CD4-positive, alpha-beta T cell (primary cell): ENCODE measurements at regions of chr14 and their contacts with region 1.

Region 1: GRCh38 chr14:53109105-53110041 is 43.8 kb downstream of the DDHD1 start:
- DNase-seq: peak; percentile 16 to 83 (median 34)
- ATAC-seq: peak; percentile 30
- H3K4me3 ChIP-seq: peak overlapping the region; percentile 61
- H3K4me3 Mint-ChIP-seq: no peak overlapping the region
- H3K27ac ChIP-seq: peak overlapping the region; percentile 63 to 65
- H3K27ac Mint-ChIP-seq: no peak overlapping the region
- H3K4me1 ChIP-seq: peaks cover 15% of the 10 kb centered on the region
- H3K4me1 Mint-ChIP-seq: peaks cover 8% of the 10 kb centered on the region
- H3K27me3 ChIP-seq: no peaks in the 10 kb centered on the region
- H3K27me3 Mint-ChIP-seq: no peaks in the 10 kb centered on the region
- CTCF ChIP-seq: no peak

Region 2: DNA sequence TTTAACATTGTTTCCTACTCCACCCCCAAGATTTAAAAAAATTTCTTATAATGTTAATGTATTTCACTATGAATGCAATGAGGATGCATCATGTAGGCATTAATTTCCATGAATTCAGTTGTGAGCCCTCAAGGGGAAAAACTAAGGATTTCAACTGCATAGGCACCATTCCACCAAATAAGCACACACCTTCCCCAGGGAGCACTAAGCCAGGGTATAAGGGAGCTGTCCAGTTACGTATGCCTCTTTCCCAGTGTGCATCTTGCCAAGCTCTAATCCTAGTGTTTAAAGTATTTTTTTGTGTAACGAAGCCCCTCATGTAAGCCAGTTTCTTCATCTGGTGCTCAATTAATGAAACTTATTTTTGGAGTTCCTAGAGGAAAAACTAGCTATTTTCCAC is 165.1 kb before region 1 on chr14:
- CTCF ChIA-PET with region 1: no interaction called
- POLR2A ChIA-PET with region 1: no interaction called
- intact Hi-C with region 1: no loop called
- DNase-seq: no peak
- ATAC-seq: no peak
- H3K4me3 ChIP-seq: no peak overlapping the region
- H3K4me3 Mint-ChIP-seq: no peak overlapping the region
- H3K27ac ChIP-seq: no peak overlapping the region
- H3K27ac Mint-ChIP-seq: no peak overlapping the region
- H3K4me1 ChIP-seq: no peaks in the 10 kb centered on the region
- H3K4me1 Mint-ChIP-seq: peaks cover 2% of the 10 kb centered on the region
- H3K27me3 ChIP-seq: peaks cover 21 to 31% of the 10 kb centered on the region in 2 experiments
- H3K27me3 Mint-ChIP-seq: peaks cover 42% of the 10 kb centered on the region
- CTCF ChIP-seq: no peak

Region 3: GRCh38 chr14:53126731-53127130 is 17.4 kb after region 1 on chr14:
- CTCF ChIA-PET with region 1: interaction called, 3 read pairs
- POLR2A ChIA-PET with region 1: interaction called, 11 read pairs
- intact Hi-C with region 1: no loop called
- DNase-seq: peak in 1 of 14 experiments; percentile 46
- ATAC-seq: no peak
- H3K4me3 ChIP-seq: peak overlapping the region; percentile 5
- H3K4me3 Mint-ChIP-seq: peak overlapping the region; percentile 76
- H3K27ac ChIP-seq: peak overlapping the region in 1 of 2 donors; percentile 20
- H3K27ac Mint-ChIP-seq: peak overlapping the region; percentile 73
- H3K4me1 ChIP-seq: peaks cover 12% of the 10 kb centered on the region
- H3K4me1 Mint-ChIP-seq: peaks cover 16% of the 10 kb centered on the region
- H3K27me3 ChIP-seq: no peaks in the 10 kb centered on the region
- H3K27me3 Mint-ChIP-seq: no peaks in the 10 kb centered on the region
- CTCF ChIP-seq: no peak

Region 4: GRCh38 chr14:53217295-53217994 is 108.1 kb after region 1 on chr14:
- CTCF ChIA-PET with region 1: no interaction called
- POLR2A ChIA-PET with region 1: interaction called, 10 read pairs
- intact Hi-C with region 1: no loop called
- DNase-seq: peak; percentile 36 to 83 (median 58)
- ATAC-seq: peak; percentile 96
- H3K4me3 ChIP-seq: peak overlapping the region; percentile 58
- H3K4me3 Mint-ChIP-seq: peak overlapping the region; percentile 94
- H3K27ac ChIP-seq: no peak overlapping the region
- H3K27ac Mint-ChIP-seq: peak overlapping the region; percentile 51
- H3K4me1 ChIP-seq: peaks cover 10% of the 10 kb centered on the region
- H3K4me1 Mint-ChIP-seq: peaks cover 19% of the 10 kb centered on the region
- H3K27me3 ChIP-seq: no peaks in the 10 kb centered on the region
- H3K27me3 Mint-ChIP-seq: no peaks in the 10 kb centered on the region
- CTCF ChIP-seq: peak; percentile 56

Region 5: GRCh38 chr14:53325176-53325806 is 215.9 kb after region 1 on chr14:
- CTCF ChIA-PET with region 1: no interaction called
- POLR2A ChIA-PET with region 1: no interaction called
- intact Hi-C with region 1: no loop called
- DNase-seq: no peak
- ATAC-seq: no peak
- H3K4me3 ChIP-seq: no peak overlapping the region
- H3K4me3 Mint-ChIP-seq: no peak overlapping the region
- H3K27ac ChIP-seq: no peak overlapping the region
- H3K27ac Mint-ChIP-seq: no peak overlapping the region
- H3K4me1 ChIP-seq: no peaks in the 10 kb centered on the region
- H3K4me1 Mint-ChIP-seq: no peaks in the 10 kb centered on the region
- H3K27me3 ChIP-seq: no peaks in the 10 kb centered on the region
- H3K27me3 Mint-ChIP-seq: no peaks in the 10 kb centered on the region
- CTCF ChIP-seq: no peak